ENCODE measurements at regions of chr4 and their contacts with region 1.

Region 1: GRCh38 chr4:139554893-139555704 is 920 bp downstream of the SETD7 start:
- DNase-seq: peak; percentile 96
- H3K4me3 ChIP-seq: peak overlapping the region; percentile 71 to 91 (median 88)
- H3K27ac ChIP-seq: peak overlapping the region; percentile 94 to 99 (median 97)
- H3K4me1 ChIP-seq: peaks cover 0 to 79% (median 70%) of the 10 kb centered on the region in 4 donors
- H3K27me3 ChIP-seq: no peaks in the 10 kb centered on the region
- CTCF ChIP-seq: no peak
- EP300 ChIP-seq: peak in 2 of 4 donors; percentile 34 to 84
- POLR2A ChIP-seq: peak; percentile 51 to 63

Region 2: GRCh38 chr4:139301113-139301820 is 253.8 kb before region 1 on chr4 and contains the start of gene NAA15:
- intact Hi-C with region 1: loop called (anchors 10 kb)
- DNase-seq: peak; percentile 99
- H3K4me3 ChIP-seq: peak within 1 kb of the TSS; percentile 87 to 99 (median 96)
- H3K27ac ChIP-seq: peak within 1 kb of the TSS; percentile 93 to 98 (median 96)
- H3K4me1 ChIP-seq: peaks cover 0 to 60% (median 35%) of the 10 kb centered on the region in 4 donors
- H3K27me3 ChIP-seq: no peaks in the 10 kb centered on the region
- CTCF ChIP-seq: no peak
- EP300 ChIP-seq: peak in 1 of 4 donors; percentile 68
- POLR2A ChIP-seq: peak; percentile 87
- total RNA-seq, gene NAA15: 21.6 to 40.3 (median 28.9) TPM

Region 3: GRCh38 chr4:139453371-139454110 is 101.6 kb before region 1 on chr4:
- intact Hi-C with region 1: loop called (anchors 2 kb)
- DNase-seq: peak; percentile 99
- H3K4me3 ChIP-seq: peak overlapping the region; percentile 80 to 91 (median 87)
- H3K27ac ChIP-seq: peak overlapping the region; percentile 92 to 98 (median 94)
- H3K4me1 ChIP-seq: peaks cover 0 to 47% (median 32%) of the 10 kb centered on the region in 4 donors
- H3K27me3 ChIP-seq: no peaks in the 10 kb centered on the region
- CTCF ChIP-seq: peak in 1 of 4 experiments; percentile 8
- EP300 ChIP-seq: no peak
- POLR2A ChIP-seq: peak; percentile 80 to 83

Region 4: DNA sequence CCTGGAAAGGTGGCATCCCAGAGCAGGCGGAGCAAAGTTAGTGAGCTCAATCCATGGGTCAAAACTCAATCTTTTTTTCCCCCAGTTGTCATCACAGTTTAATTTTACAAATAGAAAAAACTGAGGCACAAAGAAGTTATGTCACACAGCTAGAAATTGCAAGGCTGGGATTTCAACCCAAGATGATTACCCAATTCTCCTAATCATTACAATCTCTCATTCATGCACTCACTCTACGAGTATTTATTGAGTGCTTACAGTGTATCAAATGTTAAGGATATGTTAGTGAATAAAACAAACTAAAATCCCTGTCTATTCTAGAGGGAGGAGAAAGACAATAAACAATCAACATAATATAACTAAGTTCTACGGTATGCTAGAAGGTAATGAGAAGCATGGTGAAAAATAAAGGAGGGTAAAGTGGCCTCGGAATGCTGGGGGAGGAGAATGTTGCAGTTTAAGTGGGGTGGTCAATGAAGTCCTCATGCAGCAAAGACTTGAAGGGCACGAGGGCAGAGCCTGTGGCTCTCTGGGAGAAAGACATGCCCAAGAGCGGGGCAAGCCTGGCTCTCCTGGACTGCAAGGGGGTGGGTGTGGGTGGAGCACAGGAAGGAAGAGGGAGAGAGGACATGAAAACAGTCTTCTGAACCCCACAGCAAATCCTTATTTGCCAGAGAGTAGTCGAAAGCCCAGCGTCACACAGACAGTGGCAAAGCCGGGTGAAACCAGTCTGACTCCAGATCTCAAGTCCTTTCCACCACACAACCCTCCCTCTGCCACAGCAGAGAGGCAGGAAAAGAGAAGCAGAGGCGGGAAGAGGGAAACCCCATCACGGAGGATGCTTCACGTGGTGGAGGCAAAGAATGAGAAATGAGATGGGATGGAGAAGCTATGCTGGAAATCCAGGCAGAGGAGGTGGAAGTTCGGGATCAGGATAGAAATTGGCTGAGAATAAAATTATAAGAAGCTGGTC is 52.9 kb before region 1 on chr4:
- intact Hi-C with region 1: loop called (anchors 5 kb)
- DNase-seq: no peak
- H3K4me3 ChIP-seq: no peak overlapping the region
- H3K27ac ChIP-seq: no peak overlapping the region
- H3K4me1 ChIP-seq: peaks cover 0 to 5% (median 4%) of the 10 kb centered on the region in 4 donors
- H3K27me3 ChIP-seq: no peaks in the 10 kb centered on the region
- CTCF ChIP-seq: no peak
- EP300 ChIP-seq: no peak
- POLR2A ChIP-seq: no peak

Region 5: GRCh38 chr4:139568206-139568955 is 13.3 kb after region 1 on chr4:
- intact Hi-C with region 1: no loop called
- DNase-seq: no peak
- H3K4me3 ChIP-seq: no peak overlapping the region
- H3K27ac ChIP-seq: no peak overlapping the region
- H3K4me1 ChIP-seq: peaks cover 0 to 4% (median 2%) of the 10 kb centered on the region in 4 donors
- H3K27me3 ChIP-seq: no peaks in the 10 kb centered on the region
- CTCF ChIP-seq: no peak
- EP300 ChIP-seq: no peak
- POLR2A ChIP-seq: no peak

Region 6: GRCh38 chr4:139651282-139652194 is 96.4 kb after region 1 on chr4:
- intact Hi-C with region 1: loop called (anchors 5 kb)
- DNase-seq: peak; percentile 91
- H3K4me3 ChIP-seq: peak overlapping the region in 2 of 4 donors; percentile 20 to 26
- H3K27ac ChIP-seq: no peak overlapping the region
- H3K4me1 ChIP-seq: peaks cover 0 to 5% (median 2%) of the 10 kb centered on the region in 4 donors
- H3K27me3 ChIP-seq: no peaks in the 10 kb centered on the region
- CTCF ChIP-seq: peak; percentile 79 to 94 (median 84)
- EP300 ChIP-seq: no peak
- POLR2A ChIP-seq: no peak

Region 7: GRCh38 chr4:139692309-139693012 is 137.4 kb after region 1 on chr4:
- intact Hi-C with region 1: no loop called
- DNase-seq: no peak
- H3K4me3 ChIP-seq: no peak overlapping the region
- H3K27ac ChIP-seq: no peak overlapping the region
- H3K4me1 ChIP-seq: no peaks in the 10 kb centered on the region
- H3K27me3 ChIP-seq: no peaks in the 10 kb centered on the region
- CTCF ChIP-seq: no peak
- EP300 ChIP-seq: no peak
- POLR2A ChIP-seq: no peak

Region 8: DNA sequence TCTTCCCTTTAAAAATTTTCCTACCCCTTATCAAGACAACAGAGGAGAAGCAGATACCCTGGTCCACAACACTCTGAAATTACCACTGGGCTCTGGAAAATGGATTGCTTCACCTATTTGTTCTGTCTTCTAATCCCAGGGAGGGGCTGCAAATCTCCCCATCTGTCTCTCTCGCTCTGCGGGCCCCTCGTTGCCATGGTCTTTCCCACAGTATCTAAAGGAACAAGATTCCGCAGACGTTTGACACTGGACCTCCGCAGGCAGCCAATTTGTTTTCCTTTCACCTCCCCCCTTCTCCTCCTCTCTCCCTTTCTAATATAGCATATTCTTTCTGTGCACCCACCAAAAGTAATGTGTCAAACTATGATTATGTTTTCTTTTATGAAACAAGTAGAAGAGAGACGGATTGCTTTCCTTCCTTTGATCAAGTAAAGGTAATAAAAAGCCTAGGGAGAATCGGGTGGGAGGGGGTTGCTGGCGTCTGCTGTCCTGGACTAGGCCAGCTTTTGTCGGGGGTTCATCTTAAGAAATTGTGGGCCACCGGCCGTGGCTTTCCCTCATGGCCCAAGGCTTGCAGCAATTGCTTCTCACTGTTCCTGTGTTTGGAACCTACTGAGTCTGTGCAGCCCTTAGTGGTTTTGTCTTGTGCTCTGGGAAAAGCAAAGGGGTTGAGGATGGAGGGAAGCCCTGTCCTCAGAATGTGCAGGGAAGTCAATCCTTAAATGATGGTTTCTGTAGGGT is 191.5 kb after region 1 on chr4:
- intact Hi-C with region 1: no loop called
- DNase-seq: no peak
- H3K4me3 ChIP-seq: no peak overlapping the region
- H3K27ac ChIP-seq: no peak overlapping the region
- H3K4me1 ChIP-seq: no peaks in the 10 kb centered on the region
- H3K27me3 ChIP-seq: no peaks in the 10 kb centered on the region
- CTCF ChIP-seq: no peak
- EP300 ChIP-seq: no peak
- POLR2A ChIP-seq: no peak

Region 9: DNA sequence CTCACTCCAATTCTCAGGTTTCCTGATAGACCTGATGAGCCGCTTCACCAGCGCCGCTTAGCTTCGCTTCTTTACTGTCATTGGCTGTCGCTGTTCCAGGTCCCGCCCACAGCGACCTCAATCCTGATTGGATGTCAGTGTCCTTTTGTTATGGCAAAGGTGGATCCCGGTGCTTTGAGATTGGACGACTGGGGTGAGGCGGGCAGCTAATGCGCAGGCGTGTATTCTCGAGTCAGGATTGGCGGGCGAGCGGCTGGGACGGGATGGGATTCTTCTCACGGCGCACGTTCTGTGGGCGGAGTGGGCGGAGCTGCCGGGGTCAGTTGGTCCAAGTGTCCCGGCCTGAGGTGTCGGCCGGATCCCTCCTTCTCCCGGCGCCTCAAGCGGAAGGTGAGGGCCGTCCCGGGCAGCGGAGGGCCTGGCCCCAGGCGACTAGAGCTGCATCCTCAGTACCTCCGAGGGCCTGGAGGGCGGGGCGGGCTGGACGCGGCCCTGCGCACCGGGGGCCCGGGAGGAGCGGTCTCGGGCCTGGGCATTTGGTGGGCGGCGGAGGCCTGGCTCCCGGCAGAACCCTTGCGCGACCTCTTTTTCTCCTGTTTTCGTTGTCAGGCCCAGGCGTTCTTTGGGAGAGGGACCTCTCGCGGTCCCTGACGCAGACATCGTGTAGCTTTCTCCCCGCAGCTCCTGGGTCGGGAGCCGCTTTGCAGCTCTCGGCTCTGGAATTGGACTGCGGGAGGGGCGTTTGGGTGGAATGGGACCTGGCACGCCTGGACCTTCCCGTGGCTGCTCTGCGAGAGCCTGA is 818.4 kb after region 1 on chr4 and contains the start of gene SCOC:
- intact Hi-C with region 1: loop called (anchors 10 kb)
- DNase-seq: peak; percentile 100
- H3K4me3 ChIP-seq: peak within 1 kb of the TSS; percentile 72 to 93 (median 84)
- H3K27ac ChIP-seq: peak within 1 kb of the TSS; percentile 93 to 97 (median 96)
- H3K4me1 ChIP-seq: peaks cover 0 to 48% (median 28%) of the 10 kb centered on the region in 4 donors
- H3K27me3 ChIP-seq: no peaks in the 10 kb centered on the region
- CTCF ChIP-seq: no peak
- EP300 ChIP-seq: no peak
- POLR2A ChIP-seq: peak; percentile 44 to 67
- total RNA-seq, gene SCOC: 55.9 to 74.2 (median 65.5) TPM

Region 10: DNA sequence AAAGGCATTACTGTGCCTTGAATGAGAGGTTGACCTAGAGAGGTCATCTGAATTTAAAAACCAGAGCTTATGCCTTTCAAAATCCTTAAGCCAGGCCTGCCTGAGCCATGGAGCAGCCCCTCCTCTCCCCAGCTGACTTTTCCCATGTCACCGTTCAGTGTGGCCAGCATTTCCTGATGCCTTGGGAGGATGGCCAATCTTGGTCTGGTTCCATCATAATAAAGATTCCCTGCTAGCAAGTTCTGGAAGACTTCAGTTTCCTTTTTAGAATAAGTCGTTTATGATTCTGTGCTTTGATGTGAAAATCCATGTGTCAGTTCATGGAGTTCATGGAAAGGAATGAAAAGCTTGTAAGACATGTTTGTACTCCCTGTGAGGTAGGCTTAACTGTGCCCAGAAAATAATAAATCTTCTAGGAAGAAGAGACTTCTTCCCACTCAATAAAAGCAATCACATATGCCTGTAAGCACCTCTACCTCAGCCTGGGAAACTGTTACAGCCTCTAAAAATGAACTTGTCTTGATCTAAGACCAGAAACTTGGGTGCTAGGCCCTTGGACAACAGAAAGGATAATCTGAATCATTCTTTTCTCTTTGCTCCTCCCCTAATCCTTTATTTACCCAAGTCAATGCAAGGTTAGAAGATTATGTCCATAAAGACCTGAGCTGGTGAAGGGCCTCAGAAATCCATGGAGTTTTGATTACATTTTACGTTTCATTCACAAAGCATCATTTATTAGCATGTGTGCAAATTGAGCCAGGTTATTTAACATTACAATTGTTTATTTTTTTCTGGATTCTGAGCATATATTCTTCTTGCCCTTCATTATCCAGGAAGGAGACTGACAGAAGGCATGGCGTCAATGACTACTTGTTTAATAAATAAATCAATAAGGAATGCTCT is 1285.0 kb after region 1 on chr4:
- intact Hi-C with region 1: no loop called
- DNase-seq: no peak
- H3K4me3 ChIP-seq: no peak overlapping the region
- H3K27ac ChIP-seq: peak overlapping the region; percentile 29 to 75 (median 67)
- H3K4me1 ChIP-seq: peaks cover 0 to 16% (median 14%) of the 10 kb centered on the region in 4 donors
- H3K27me3 ChIP-seq: no peaks in the 10 kb centered on the region
- CTCF ChIP-seq: no peak
- EP300 ChIP-seq: peak in 2 of 4 donors; percentile 30 to 36
- POLR2A ChIP-seq: no peak